GM12878 (cell line): ENCODE measurements at regions of chr9 and their contacts with region 1.

Region 1: DNA sequence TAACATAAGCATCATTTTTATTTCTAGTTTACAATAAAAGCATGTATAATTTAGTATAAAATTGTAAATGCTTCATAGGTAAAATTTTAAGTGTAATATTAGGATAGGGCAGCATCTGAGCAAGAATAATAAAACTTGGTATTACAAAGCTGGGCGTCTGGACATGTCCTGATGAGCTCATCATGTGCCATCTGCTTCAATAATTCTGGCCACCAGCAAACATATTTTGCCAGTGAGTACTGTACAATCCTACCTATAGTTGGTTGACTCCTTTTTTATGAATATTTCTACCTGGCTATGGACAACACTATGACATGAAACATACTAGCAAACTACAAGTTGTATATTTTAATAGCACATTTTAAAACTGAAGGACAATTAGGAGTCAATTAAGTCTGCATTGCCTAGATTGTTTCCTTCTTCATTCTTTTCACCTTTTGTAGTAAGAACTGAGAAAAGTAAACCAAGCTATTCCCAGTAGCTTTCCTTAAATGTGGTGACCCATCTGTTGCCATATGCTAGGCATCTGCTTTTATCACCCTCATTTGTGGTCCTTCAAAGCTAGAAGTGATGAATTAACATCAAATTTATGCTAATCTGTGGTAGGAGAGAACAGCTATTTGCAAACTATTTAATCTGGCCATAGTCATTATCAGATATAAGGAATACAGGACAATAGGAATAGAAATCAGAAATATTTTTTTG is 23.4 kb downstream of the LURAP1L start:
- DNase-seq: no peak
- ATAC-seq: 0 out of 3 replicates have a peak, but pooled peaks have one; percentile 21
- H3K4me3 ChIP-seq: no peak overlapping the region
- H3K27ac ChIP-seq: no peak overlapping the region
- H3K4me1 ChIP-seq: no peaks in the 10 kb centered on the region
- H3K27me3 ChIP-seq: no peaks in the 10 kb centered on the region
- CTCF ChIP-seq: no peak
- EP300 ChIP-seq: no peak
- POLR2A ChIP-seq: no peak
- RAD21 ChIP-seq: no peak

Region 2: DNA sequence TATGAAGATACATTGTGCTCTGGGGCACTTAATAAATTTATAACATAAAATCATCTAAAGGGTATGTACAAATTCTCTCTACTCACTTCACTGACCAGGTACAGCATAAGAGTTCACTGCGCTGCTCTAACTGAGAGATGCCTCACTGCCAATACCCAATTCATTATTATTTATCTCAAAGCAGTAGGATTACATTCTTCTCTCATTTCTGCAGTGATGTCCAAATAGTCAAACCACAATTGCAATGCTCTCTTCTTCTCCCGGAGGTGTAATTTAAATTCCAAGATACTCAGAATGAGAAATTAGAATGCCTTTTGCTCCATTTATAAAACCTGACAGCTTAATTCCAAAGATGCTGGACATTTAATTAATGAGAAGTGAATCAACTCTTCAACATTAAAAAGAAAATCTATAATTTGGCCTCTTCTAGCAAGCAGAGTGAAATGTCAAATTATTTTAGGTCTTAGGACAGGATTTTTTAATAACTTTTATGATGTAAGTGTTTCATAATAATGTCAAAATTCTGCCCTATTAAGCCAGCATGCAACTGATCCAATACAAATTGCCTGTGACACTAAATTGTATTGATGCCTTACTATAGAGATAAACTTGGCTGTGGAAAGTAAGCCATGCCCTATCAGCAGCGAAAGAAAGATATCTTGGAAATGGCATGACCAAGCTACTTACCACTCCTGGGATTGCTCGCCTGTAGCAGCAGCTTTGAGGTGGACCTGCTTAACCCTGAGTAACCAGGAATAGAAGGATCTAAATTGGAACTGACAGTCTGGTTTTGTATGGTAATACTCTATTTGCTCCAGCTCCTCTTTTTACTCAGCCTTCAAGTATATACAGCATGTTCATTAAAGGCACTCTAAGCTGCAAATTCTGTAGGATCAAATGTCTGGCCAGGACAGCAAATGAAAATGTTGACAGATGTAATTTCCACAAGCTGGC is 479.2 kb before region 1 on chr9:
- CTCF ChIA-PET with region 1: no interaction called
- POLR2A ChIA-PET with region 1: no interaction called
- RAD21 ChIA-PET with region 1: no interaction called
- SMC1A ChIA-PET with region 1: no interaction called
- in situ Hi-C with region 1: no loop called
- intact Hi-C with region 1: no loop called
- DNase-seq: no peak
- ATAC-seq: no peak
- H3K4me3 ChIP-seq: no peak overlapping the region
- H3K27ac ChIP-seq: no peak overlapping the region
- H3K4me1 ChIP-seq: no peaks in the 10 kb centered on the region
- H3K27me3 ChIP-seq: no peaks in the 10 kb centered on the region
- CTCF ChIP-seq: no peak
- EP300 ChIP-seq: no peak
- POLR2A ChIP-seq: no peak
- RAD21 ChIP-seq: no peak

Region 3: GRCh38 chr9:12604164-12604821 is 193.9 kb before region 1 on chr9:
- CTCF ChIA-PET with region 1: no interaction called
- POLR2A ChIA-PET with region 1: no interaction called
- RAD21 ChIA-PET with region 1: no interaction called
- SMC1A ChIA-PET with region 1: no interaction called
- in situ Hi-C with region 1: no loop called
- intact Hi-C with region 1: no loop called
- DNase-seq: no peak
- ATAC-seq: no peak
- H3K4me3 ChIP-seq: no peak overlapping the region
- H3K27ac ChIP-seq: no peak overlapping the region
- H3K4me1 ChIP-seq: no peaks in the 10 kb centered on the region
- H3K27me3 ChIP-seq: no peaks in the 10 kb centered on the region
- CTCF ChIP-seq: no peak
- EP300 ChIP-seq: no peak
- POLR2A ChIP-seq: no peak
- RAD21 ChIP-seq: no peak

Region 4: GRCh38 chr9:12785941-12786340 is 12.3 kb before region 1 on chr9:
- CTCF ChIA-PET with region 1: interaction called, 5 read pairs
- POLR2A ChIA-PET with region 1: no interaction called
- RAD21 ChIA-PET with region 1: no interaction called
- SMC1A ChIA-PET with region 1: interaction called, 6 read pairs
- in situ Hi-C with region 1: no loop called
- intact Hi-C with region 1: loop called (anchors 2 kb)
- DNase-seq: no peak
- ATAC-seq: no peak
- H3K4me3 ChIP-seq: no peak overlapping the region
- H3K27ac ChIP-seq: no peak overlapping the region
- H3K4me1 ChIP-seq: no peaks in the 10 kb centered on the region
- H3K27me3 ChIP-seq: no peaks in the 10 kb centered on the region
- CTCF ChIP-seq: no peak
- EP300 ChIP-seq: no peak
- POLR2A ChIP-seq: no peak
- RAD21 ChIP-seq: no peak

Region 5: GRCh38 chr9:12813960-12814876 is 16.0 kb after region 1 on chr9:
- CTCF ChIA-PET with region 1: interaction called, 7 read pairs
- POLR2A ChIA-PET with region 1: no interaction called
- RAD21 ChIA-PET with region 1: interaction called, 4 read pairs
- SMC1A ChIA-PET with region 1: interaction called, 17 read pairs
- in situ Hi-C with region 1: no loop called
- intact Hi-C with region 1: no loop called
- DNase-seq: no peak
- ATAC-seq: peak; percentile 85
- H3K4me3 ChIP-seq: no peak overlapping the region
- H3K27ac ChIP-seq: no peak overlapping the region
- H3K4me1 ChIP-seq: no peaks in the 10 kb centered on the region
- H3K27me3 ChIP-seq: no peaks in the 10 kb centered on the region
- CTCF ChIP-seq: no peak
- EP300 ChIP-seq: no peak
- POLR2A ChIP-seq: no peak
- RAD21 ChIP-seq: no peak